HCT116 (cell line): ENCODE measurements at regions of chr5 and their contacts with region 1.

Region 1: GRCh38 chr5:55923177-55923771 is 71.5 kb downstream of the IL6ST start:
- DNase-seq: no peak
- ATAC-seq: no peak
- H3K4me3 ChIP-seq: no peak overlapping the region
- H3K27ac ChIP-seq: no peak overlapping the region
- H3K4me1 ChIP-seq: no peaks in the 10 kb centered on the region
- H3K27me3 ChIP-seq: no peaks in the 10 kb centered on the region
- CTCF ChIP-seq: no peak
- POLR2A ChIP-seq: no peak
- RAD21 ChIP-seq: no peak

Region 2: GRCh38 chr5:55711968-55712859 is 211.1 kb before region 1 on chr5 and contains the start of gene SLC38A9:
- CTCF ChIA-PET with region 1: no interaction called
- POLR2A ChIA-PET with region 1: no interaction called
- RAD21 ChIA-PET with region 1: no interaction called
- intact Hi-C with region 1: loop called (anchors 5 kb)
- DNase-seq: peak; percentile 83
- ATAC-seq: peak; percentile 100
- H3K4me3 ChIP-seq: peak within 1 kb of the TSS; percentile 93 to 97
- H3K27ac ChIP-seq: no peak within 1 kb of the TSS; the same call in 1 of the 2 replicates
- H3K4me1 ChIP-seq: peaks cover 6 to 14% of the 10 kb centered on the region in 2 experiments; a peak in 2 of 4 replicates
- H3K27me3 ChIP-seq: no peaks in the 10 kb centered on the region
- CTCF ChIP-seq: no peak
- POLR2A ChIP-seq: peak; percentile 89
- RAD21 ChIP-seq: no peak
- total RNA-seq, gene SLC38A9: 12.6 TPM

Region 3: GRCh38 chr5:55777332-55777731 is 145.9 kb before region 1 on chr5:
- CTCF ChIA-PET with region 1: no interaction called
- POLR2A ChIA-PET with region 1: no interaction called
- RAD21 ChIA-PET with region 1: no interaction called
- intact Hi-C with region 1: no loop called
- DNase-seq: no peak
- ATAC-seq: no peak
- H3K4me3 ChIP-seq: no peak overlapping the region
- H3K27ac ChIP-seq: no peak overlapping the region
- H3K4me1 ChIP-seq: no peaks in the 10 kb centered on the region
- H3K27me3 ChIP-seq: no peaks in the 10 kb centered on the region
- CTCF ChIP-seq: no peak
- POLR2A ChIP-seq: no peak
- RAD21 ChIP-seq: no peak

Region 4: GRCh38 chr5:55904152-55904551 is 19.1 kb before region 1 on chr5:
- CTCF ChIA-PET with region 1: no interaction called
- POLR2A ChIA-PET with region 1: no interaction called
- RAD21 ChIA-PET with region 1: no interaction called
- intact Hi-C with region 1: no loop called
- DNase-seq: no peak
- ATAC-seq: no peak
- H3K4me3 ChIP-seq: no peak overlapping the region
- H3K27ac ChIP-seq: no peak overlapping the region
- H3K4me1 ChIP-seq: peaks cover 0 to 14% of the 10 kb centered on the region in 2 experiments; a peak in 2 of 4 replicates
- H3K27me3 ChIP-seq: no peaks in the 10 kb centered on the region
- CTCF ChIP-seq: no peak
- POLR2A ChIP-seq: no peak
- RAD21 ChIP-seq: no peak

Region 5: GRCh38 chr5:56310711-56311204 is 387.5 kb after region 1 on chr5:
- CTCF ChIA-PET with region 1: no interaction called
- POLR2A ChIA-PET with region 1: no interaction called
- RAD21 ChIA-PET with region 1: no interaction called
- intact Hi-C with region 1: no loop called
- DNase-seq: no peak
- ATAC-seq: no peak
- H3K4me3 ChIP-seq: no peak overlapping the region
- H3K27ac ChIP-seq: no peak overlapping the region
- H3K4me1 ChIP-seq: no peaks in the 10 kb centered on the region
- H3K27me3 ChIP-seq: no peaks in the 10 kb centered on the region
- CTCF ChIP-seq: no peak
- POLR2A ChIP-seq: no peak
- RAD21 ChIP-seq: no peak